ENCODE measurements at regions of chr12 and their contacts with region 1.

Region 1: DNA sequence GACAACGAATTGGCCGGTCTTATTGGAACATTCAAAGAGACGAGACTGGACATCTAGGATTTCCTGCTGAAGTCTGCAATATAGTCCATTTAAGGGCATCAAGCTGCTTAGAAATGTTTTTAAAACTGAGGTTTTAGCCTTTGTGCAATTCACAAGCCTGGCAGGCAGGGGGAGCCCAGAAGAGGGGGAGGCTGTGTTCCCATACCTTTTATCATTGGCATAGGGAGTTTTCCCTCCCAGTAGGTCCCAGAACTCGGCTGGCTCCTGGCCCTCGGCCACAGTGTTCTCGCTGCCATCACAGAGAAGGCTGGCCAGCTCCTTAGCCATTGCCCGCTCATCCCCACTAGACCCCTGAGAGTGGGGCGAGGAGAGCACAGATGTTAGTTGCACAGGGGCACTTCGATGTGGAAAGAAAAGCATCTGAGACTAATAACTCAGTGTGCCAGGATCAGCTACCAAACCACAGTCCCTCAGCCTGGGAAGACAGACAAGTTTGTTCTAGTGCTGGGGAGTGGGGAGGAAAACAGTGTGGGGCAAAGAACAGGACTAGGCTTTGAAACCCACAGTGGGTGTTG is 15.1 kb downstream of the AVIL start:
- DNase-seq: peak; percentile 68
- H3K4me3 ChIP-seq: no peak overlapping the region
- H3K27ac ChIP-seq: no peak overlapping the region
- H3K4me1 ChIP-seq: no peaks in the 10 kb centered on the region; a peak in 1 of 4 replicates
- H3K27me3 ChIP-seq: no peaks in the 10 kb centered on the region
- CTCF ChIP-seq: peak; percentile 79
- EP300 ChIP-seq: no peak
- RAD21 ChIP-seq: peak; percentile 64

Region 2: GRCh38 chr12:57190037-57190436 is 613.4 kb before region 1 on chr12:
- CTCF ChIA-PET with region 1: no interaction called
- POLR2A ChIA-PET with region 1: no interaction called
- DNase-seq: no peak
- H3K4me3 ChIP-seq: no peak overlapping the region
- H3K27ac ChIP-seq: no peak overlapping the region
- H3K4me1 ChIP-seq: no peaks in the 10 kb centered on the region
- H3K27me3 ChIP-seq: no peaks in the 10 kb centered on the region
- CTCF ChIP-seq: no peak
- EP300 ChIP-seq: no peak
- RAD21 ChIP-seq: no peak

Region 3: GRCh38 chr12:57815177-57816000 is 12.0 kb after region 1 on chr12:
- CTCF ChIA-PET with region 1: interaction called, 96 read pairs
- POLR2A ChIA-PET with region 1: interaction called, 3 read pairs
- DNase-seq: peak; percentile 33
- H3K4me3 ChIP-seq: no peak overlapping the region
- H3K27ac ChIP-seq: peak overlapping the region in 1 of 2 experiments; percentile 11; a peak in 1 of 4 replicates
- H3K4me1 ChIP-seq: peaks cover 0 to 20% of the 10 kb centered on the region in 2 experiments; a peak in 2 of 4 replicates
- H3K27me3 ChIP-seq: no peaks in the 10 kb centered on the region
- CTCF ChIP-seq: no peak
- EP300 ChIP-seq: no peak
- RAD21 ChIP-seq: peak; percentile 44

Region 4: GRCh38 chr12:57899010-57899662 is 95.7 kb after region 1 on chr12:
- CTCF ChIA-PET with region 1: interaction called, 51 read pairs
- POLR2A ChIA-PET with region 1: no interaction called
- DNase-seq: no peak
- H3K4me3 ChIP-seq: no peak overlapping the region; a peak in 1 of 4 replicates
- H3K27ac ChIP-seq: peak overlapping the region; percentile 48 to 79
- H3K4me1 ChIP-seq: peaks cover 52% of the 10 kb centered on the region in 2 experiments
- H3K27me3 ChIP-seq: no peaks in the 10 kb centered on the region
- CTCF ChIP-seq: no peak
- EP300 ChIP-seq: no peak
- RAD21 ChIP-seq: no peak

Measured in SK-N-SH (cell line).